Naive thymus-derived CD8-positive, alpha-beta T cell (primary cell): ENCODE measurements at regions of chr17 and their contacts with region 1.

Region 1: GRCh38 chr17:82418001-82418986 is at the starts of genes HEXD and OGFOD3:
- DNase-seq: peak; percentile 77 to 97 (median 88)
- ATAC-seq: peak; percentile 84 to 87
- H3K4me3 Mint-ChIP-seq: peak within 1 kb of the TSS; percentile 65 to 90 (median 84)
- H3K27ac Mint-ChIP-seq: peak within 1 kb of the TSS in 9 of 10 donors; percentile 66 to 92 (median 85)
- H3K4me1 Mint-ChIP-seq: peaks cover 12 to 39% (median 35%) of the 10 kb centered on the region in 4 donors
- H3K27me3 Mint-ChIP-seq: no peaks in the 10 kb centered on the region
- polyA plus RNA-seq, gene HEXD: 12.1 to 18.8 (median 12.2) TPM
- polyA plus RNA-seq, gene OGFOD3: 32.4 to 35.2 (median 32.6) TPM

Region 2: GRCh38 chr17:82041144-82041814 is 377.0 kb before region 1 on chr17:
- POLR2A ChIA-PET with region 1: no interaction called
- DNase-seq: no peak
- ATAC-seq: no peak
- H3K4me3 Mint-ChIP-seq: no peak overlapping the region
- H3K27ac Mint-ChIP-seq: no peak overlapping the region
- H3K4me1 Mint-ChIP-seq: peaks cover 11 to 19% (median 16%) of the 10 kb centered on the region in 4 donors
- H3K27me3 Mint-ChIP-seq: no peaks in the 10 kb centered on the region

Region 3: GRCh38 chr17:82450170-82451106 is 32.1 kb after region 1 on chr17 and contains the start of gene CYBC1:
- POLR2A ChIA-PET with region 1: interaction called, 12 read pairs
- DNase-seq: peak; percentile 85 to 99 (median 94)
- ATAC-seq: peak; percentile 62 to 77
- H3K4me3 Mint-ChIP-seq: peak within 1 kb of the TSS; percentile 92 to 99 (median 95)
- H3K27ac Mint-ChIP-seq: peak within 1 kb of the TSS; percentile 96 to 99 (median 98)
- H3K4me1 Mint-ChIP-seq: peaks cover 14 to 47% (median 38%) of the 10 kb centered on the region in 4 donors
- H3K27me3 Mint-ChIP-seq: no peaks in the 10 kb centered on the region
- polyA plus RNA-seq, gene CYBC1: 133 to 149 (median 147) TPM

Region 4: DNA sequence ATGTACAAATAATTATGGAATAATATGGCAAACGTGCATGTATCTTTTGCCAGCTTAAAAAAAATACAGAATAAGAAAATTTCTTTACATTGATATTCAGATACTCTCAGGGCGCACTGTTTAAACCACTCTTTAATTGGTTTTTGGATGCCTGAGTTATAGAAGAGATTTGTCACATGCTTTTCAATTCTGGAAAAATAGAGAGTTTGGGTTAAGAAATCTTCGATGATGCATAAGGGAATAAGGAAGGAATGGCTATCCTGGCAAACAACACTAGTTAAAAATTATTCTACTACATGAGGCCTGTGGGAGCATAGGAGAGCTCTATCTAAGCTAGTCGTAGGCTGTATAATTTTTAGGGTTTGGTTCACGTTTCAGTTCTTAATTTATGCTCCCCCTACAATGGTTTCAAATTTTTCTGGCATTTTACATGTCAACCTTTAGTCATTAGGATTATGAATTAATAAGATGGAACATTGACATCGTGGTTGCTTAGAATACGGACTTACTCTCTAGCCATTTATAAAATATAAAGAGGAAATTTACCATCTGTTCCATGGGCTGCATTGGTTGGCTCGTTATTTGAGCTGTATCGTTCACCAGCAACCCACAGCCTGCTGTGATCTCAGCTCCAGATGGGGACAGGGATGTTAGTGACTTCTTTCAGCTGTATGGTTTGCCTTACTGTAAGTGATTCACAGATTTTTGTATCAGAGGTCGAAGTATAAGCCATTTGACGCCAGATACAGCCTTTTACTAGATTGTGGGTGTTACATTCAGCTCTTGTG is 56.1 kb after region 1 on chr17:
- POLR2A ChIA-PET with region 1: no interaction called
- DNase-seq: no peak
- ATAC-seq: no peak
- H3K4me3 Mint-ChIP-seq: no peak overlapping the region
- H3K27ac Mint-ChIP-seq: peak overlapping the region in 1 of 10 donors; percentile 60
- H3K4me1 Mint-ChIP-seq: peaks cover 6 to 10% (median 8%) of the 10 kb centered on the region in 4 donors
- H3K27me3 Mint-ChIP-seq: no peaks in the 10 kb centered on the region